Body of pancreas (tissue), 4 donors: ENCODE measurements at regions of chr1 and their contacts with region 1.

Region 1: DNA sequence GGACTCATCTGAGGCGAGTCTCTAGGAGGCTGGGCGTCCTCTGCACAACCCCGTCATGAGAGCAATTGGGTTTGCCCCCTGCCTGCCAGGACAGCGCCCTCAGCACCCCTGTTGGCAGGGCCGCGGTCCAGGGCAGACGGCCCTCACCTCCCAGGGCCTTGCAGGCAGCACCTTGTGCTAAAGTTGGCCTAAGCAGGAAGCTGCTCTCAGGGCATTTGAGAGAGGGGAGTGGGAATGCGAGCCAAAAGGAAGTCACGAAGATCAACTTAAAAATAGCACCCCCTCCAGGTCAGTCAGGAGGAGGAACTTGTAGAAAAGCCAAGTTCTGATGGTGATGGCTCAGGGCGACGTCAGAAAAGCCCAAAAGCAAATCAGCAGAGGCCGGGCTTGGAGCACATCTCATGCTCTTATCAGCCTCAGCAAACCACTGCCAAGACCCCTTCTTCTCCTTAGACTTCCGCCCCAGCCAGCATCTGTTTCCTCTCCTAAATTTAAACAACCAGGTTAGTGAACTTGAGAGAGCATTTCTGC is 12.6 kb upstream of the ADORA3 start:
- DNase-seq: peak in 3 of 4 donors; percentile 27 to 62 (median 31)
- ATAC-seq: peak; percentile 38
- H3K4me3 ChIP-seq: no peak overlapping the region
- H3K27ac ChIP-seq: peak overlapping the region in 3 of 4 donors; percentile 37 to 65 (median 52)
- H3K4me1 ChIP-seq: peaks cover 11% of the 10 kb centered on the region
- H3K27me3 ChIP-seq: no peaks in the 10 kb centered on the region
- CTCF ChIP-seq: peak in 3 of 7 experiments; percentile 16 to 26 (median 22)
- POLR2A ChIP-seq: peak in 1 of 3 donors; percentile 27

Region 2: DNA sequence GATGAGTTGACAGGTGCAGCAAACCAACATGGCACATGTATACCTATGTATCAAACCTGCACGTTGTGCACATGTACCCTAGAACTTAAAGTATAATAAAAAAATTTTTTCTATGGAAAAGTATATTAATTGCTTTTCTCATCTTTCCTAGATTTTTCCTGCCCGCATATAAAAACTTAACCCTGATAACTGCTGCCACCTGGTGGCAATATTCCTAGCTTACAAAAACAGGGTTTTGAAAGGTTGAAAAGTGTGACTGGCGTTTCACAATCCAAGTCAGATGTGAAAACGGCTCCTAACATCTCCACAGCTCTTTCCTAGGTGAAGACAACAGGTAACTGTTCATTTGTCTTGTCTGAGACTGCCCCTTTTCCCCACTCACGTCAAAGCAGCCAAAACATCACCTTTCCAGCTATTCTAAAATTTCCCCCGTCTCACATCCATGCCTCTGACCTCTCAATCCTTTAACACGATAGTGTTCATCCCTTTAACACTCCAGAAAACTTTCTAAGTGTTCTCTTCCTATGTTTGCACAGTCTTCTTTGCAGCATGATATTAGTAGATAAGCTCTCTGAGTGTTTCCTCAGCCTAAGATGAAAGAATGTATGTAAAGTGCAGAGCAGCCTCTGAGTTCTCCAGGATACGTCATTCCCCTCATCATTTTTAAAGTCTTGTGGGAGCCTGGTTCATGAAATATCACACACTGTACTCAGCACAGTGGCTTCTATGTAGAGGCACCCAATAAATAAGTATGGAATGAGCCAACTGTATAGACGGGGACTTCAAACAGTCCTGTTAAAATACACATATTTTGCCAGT is 116.1 kb before region 1 on chr1:
- intact Hi-C with region 1: no loop called
- DNase-seq: peak; percentile 61 to 77 (median 73)
- ATAC-seq: peak; percentile 48
- H3K4me3 ChIP-seq: no peak overlapping the region
- H3K27ac ChIP-seq: no peak overlapping the region
- H3K4me1 ChIP-seq: no peaks in the 10 kb centered on the region
- H3K27me3 ChIP-seq: no peaks in the 10 kb centered on the region
- CTCF ChIP-seq: peak; percentile 27 to 85 (median 75)
- POLR2A ChIP-seq: no peak

Region 3: DNA sequence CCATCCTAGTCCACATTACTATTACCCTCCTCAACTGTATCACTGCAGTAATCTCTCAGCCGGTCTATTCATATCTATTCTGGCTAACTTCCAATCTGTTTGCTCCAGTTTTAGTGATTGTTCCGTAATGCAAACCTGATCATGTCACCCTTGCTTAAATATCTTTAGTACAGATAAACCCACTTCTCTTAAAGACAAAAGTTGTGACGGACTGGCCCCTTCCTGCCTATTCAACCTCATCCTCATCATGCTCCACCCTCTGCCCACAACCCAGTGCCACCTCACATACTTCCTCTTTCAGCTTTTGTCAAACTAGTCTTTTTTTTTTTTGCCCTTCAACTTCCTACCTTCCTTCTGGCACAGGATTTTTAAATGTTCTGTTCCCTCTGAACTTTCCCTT is 45.1 kb before region 1 on chr1:
- intact Hi-C with region 1: no loop called
- DNase-seq: peak in 3 of 4 donors; percentile 20 to 76 (median 30)
- ATAC-seq: no peak
- H3K4me3 ChIP-seq: no peak overlapping the region
- H3K27ac ChIP-seq: peak overlapping the region in 2 of 4 donors; percentile 3 to 63
- H3K4me1 ChIP-seq: peaks cover 8% of the 10 kb centered on the region
- H3K27me3 ChIP-seq: no peaks in the 10 kb centered on the region
- CTCF ChIP-seq: no peak
- POLR2A ChIP-seq: peak in 1 of 3 donors; percentile 38

Region 4: GRCh38 chr1:111660204-111661150 is 144.4 kb after region 1 on chr1:
- intact Hi-C with region 1: loop called (anchors 10 kb)
- DNase-seq: no peak
- ATAC-seq: no peak
- H3K4me3 ChIP-seq: no peak overlapping the region
- H3K27ac ChIP-seq: peak overlapping the region in 1 of 4 donors; percentile 11
- H3K4me1 ChIP-seq: peaks cover 33% of the 10 kb centered on the region
- H3K27me3 ChIP-seq: no peaks in the 10 kb centered on the region
- CTCF ChIP-seq: no peak
- POLR2A ChIP-seq: no peak

Region 5: GRCh38 chr1:111704776-111705175 is 188.7 kb after region 1 on chr1:
- intact Hi-C with region 1: no loop called
- DNase-seq: no peak
- ATAC-seq: no peak
- H3K4me3 ChIP-seq: no peak overlapping the region
- H3K27ac ChIP-seq: no peak overlapping the region
- H3K4me1 ChIP-seq: no peaks in the 10 kb centered on the region
- H3K27me3 ChIP-seq: no peaks in the 10 kb centered on the region
- CTCF ChIP-seq: no peak
- POLR2A ChIP-seq: no peak